ENCODE measurements at regions of chr10 and their contacts with region 1.

Region 1: DNA sequence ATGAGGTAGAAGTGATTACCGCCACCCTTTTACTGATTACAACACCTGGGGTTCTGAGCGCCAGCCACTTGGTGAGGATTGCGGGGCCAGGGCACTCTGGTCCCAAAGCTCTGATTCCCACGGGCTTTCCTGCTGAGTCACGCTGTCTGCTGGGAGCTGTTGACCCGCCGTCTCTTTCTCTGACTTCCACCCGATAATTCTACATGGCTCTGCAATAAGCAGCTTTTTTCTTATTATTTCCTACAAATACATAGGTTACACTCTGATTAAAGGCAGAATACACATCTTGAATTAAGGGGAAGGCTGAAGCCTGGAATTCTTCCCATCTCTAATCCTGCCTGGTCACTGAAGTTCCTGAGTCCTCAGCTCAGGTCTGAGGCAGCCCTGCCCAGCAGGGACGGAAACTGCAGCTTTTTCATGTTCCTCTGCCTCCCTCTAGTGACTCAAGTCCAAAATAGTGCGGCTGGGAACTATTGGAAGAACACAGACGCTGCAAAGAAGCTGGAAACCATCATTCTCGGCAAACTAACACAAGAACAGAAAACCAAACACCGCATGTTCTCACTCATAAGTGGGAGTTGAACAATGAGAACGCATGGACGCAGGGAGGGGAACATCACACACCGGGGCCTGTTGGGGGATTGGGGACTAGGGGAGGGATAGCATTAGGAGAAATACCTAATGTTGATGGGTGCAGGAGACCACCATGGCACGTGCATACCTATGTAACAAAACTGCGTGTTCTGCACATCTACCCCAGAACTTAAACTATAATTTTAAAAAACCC is 178.3 kb downstream of the PRKCQ start:
- DNase-seq: peak; percentile 85
- ATAC-seq: peak; percentile 88
- H3K4me3 ChIP-seq: peak overlapping the region in 2 of 5 experiments; percentile 5 to 12
- H3K4me3 Mint-ChIP-seq: peak overlapping the region; percentile 75
- H3K27ac ChIP-seq: no peak overlapping the region
- H3K27ac Mint-ChIP-seq: peak overlapping the region; percentile 10
- H3K4me1 ChIP-seq: peaks cover 26% of the 10 kb centered on the region in 2 donors
- H3K4me1 Mint-ChIP-seq: peaks cover 33% of the 10 kb centered on the region
- H3K27me3 ChIP-seq: peaks cover 0 to 4% (median 2%) of the 10 kb centered on the region in 4 experiments
- H3K27me3 Mint-ChIP-seq: peaks cover 22% of the 10 kb centered on the region
- CTCF ChIP-seq: peak; percentile 82

Region 2: DNA sequence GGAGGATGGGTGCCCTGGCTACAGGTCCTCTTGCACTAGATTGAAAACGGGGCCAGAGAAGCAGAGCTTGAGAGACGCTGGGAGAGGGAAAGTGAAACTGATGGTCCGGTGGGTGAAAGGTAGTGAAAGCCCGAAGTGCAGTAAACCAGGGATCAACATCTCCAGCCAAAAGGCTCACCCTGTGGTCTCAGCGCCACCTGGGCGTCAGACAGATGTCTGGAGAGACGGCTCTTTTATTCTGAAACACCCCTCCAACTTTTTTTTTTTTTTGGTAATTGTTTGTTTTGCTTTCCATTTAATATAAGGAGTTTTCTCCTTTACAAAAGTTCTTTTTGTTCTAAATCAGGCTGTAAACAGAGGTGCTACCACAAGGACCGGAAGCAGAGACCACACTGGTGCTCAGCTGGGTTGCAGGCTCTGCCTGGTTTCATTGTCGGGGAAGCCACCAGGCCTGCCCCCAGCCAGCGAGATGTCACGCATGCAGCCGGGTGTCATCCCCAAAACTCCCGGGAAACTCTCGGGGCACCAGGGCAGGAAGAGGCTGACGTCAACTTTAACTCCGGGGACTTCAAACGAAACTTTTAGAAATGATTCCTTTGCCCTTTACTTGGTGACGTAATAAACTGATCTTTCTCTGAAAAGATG is 350.8 kb before region 1 on chr10:
- CTCF ChIA-PET with region 1: interaction called, 12 read pairs
- POLR2A ChIA-PET with region 1: no interaction called
- intact Hi-C with region 1: no loop called
- DNase-seq: peak; percentile 96
- ATAC-seq: peak; percentile 66
- H3K4me3 ChIP-seq: peak overlapping the region; percentile 35 to 63 (median 55)
- H3K4me3 Mint-ChIP-seq: peak overlapping the region; percentile 91
- H3K27ac ChIP-seq: peak overlapping the region; percentile 92
- H3K27ac Mint-ChIP-seq: peak overlapping the region; percentile 99
- H3K4me1 ChIP-seq: peaks cover 69 to 82% of the 10 kb centered on the region in 2 donors
- H3K4me1 Mint-ChIP-seq: peaks cover 87% of the 10 kb centered on the region
- H3K27me3 ChIP-seq: no peaks in the 10 kb centered on the region
- H3K27me3 Mint-ChIP-seq: no peaks in the 10 kb centered on the region
- CTCF ChIP-seq: peak; percentile 35

Region 3: GRCh38 chr10:6151087-6151977 is 250.4 kb before region 1 on chr10:
- CTCF ChIA-PET with region 1: interaction called, 77 read pairs
- POLR2A ChIA-PET with region 1: no interaction called
- intact Hi-C with region 1: no loop called
- DNase-seq: peak; percentile 84
- ATAC-seq: peak; percentile 84
- H3K4me3 ChIP-seq: peak overlapping the region; percentile 6 to 58 (median 26)
- H3K4me3 Mint-ChIP-seq: peak overlapping the region; percentile 85
- H3K27ac ChIP-seq: peak overlapping the region; percentile 40 to 78
- H3K27ac Mint-ChIP-seq: peak overlapping the region; percentile 87
- H3K4me1 ChIP-seq: peaks cover 24 to 34% of the 10 kb centered on the region in 2 donors
- H3K4me1 Mint-ChIP-seq: peaks cover 53% of the 10 kb centered on the region
- H3K27me3 ChIP-seq: no peaks in the 10 kb centered on the region
- H3K27me3 Mint-ChIP-seq: no peaks in the 10 kb centered on the region
- CTCF ChIP-seq: peak; percentile 71

Region 4: DNA sequence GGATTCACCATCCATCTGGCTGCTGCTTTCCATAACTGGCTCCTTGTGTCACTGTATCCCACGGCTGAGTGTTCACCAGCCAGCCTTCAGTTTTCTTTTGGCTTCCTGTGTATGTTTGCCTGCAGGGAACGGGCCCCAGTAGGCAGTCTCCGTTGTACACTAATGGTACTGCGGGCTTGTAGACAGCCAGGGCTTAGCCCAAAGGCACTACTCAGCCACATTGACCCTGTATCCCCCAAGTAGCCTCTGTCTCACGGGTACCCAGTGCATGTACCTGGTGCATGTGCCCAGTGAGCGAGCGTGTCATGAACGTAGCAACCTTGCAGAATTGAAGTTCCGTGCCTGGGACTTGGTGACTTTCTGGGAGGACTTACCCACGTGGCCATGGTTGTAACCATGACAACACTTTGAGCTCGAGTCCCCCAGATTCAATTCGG is 192.9 kb before region 1 on chr10:
- CTCF ChIA-PET with region 1: interaction called, 44 read pairs
- POLR2A ChIA-PET with region 1: interaction called, 72 read pairs
- intact Hi-C with region 1: no loop called
- DNase-seq: no peak
- ATAC-seq: no peak
- H3K4me3 ChIP-seq: no peak overlapping the region
- H3K4me3 Mint-ChIP-seq: no peak overlapping the region
- H3K27ac ChIP-seq: no peak overlapping the region
- H3K27ac Mint-ChIP-seq: no peak overlapping the region
- H3K4me1 ChIP-seq: peaks cover 6 to 12% of the 10 kb centered on the region in 2 donors
- H3K4me1 Mint-ChIP-seq: peaks cover 26% of the 10 kb centered on the region
- H3K27me3 ChIP-seq: no peaks in the 10 kb centered on the region
- H3K27me3 Mint-ChIP-seq: no peaks in the 10 kb centered on the region
- CTCF ChIP-seq: no peak

Region 5: GRCh38 chr10:6275022-6275997 is 126.4 kb before region 1 on chr10:
- CTCF ChIA-PET with region 1: interaction called, 13 read pairs
- POLR2A ChIA-PET with region 1: interaction called, 4 read pairs
- intact Hi-C with region 1: no loop called
- DNase-seq: peak; percentile 71
- ATAC-seq: peak; percentile 84
- H3K4me3 ChIP-seq: peak overlapping the region in 4 of 5 experiments; percentile 32 to 54 (median 37)
- H3K4me3 Mint-ChIP-seq: peak overlapping the region; percentile 86
- H3K27ac ChIP-seq: peak overlapping the region in 1 of 2 donors; percentile 54
- H3K27ac Mint-ChIP-seq: peak overlapping the region; percentile 90
- H3K4me1 ChIP-seq: peaks cover 4 to 22% of the 10 kb centered on the region in 2 donors
- H3K4me1 Mint-ChIP-seq: peaks cover 28% of the 10 kb centered on the region
- H3K27me3 ChIP-seq: peaks cover 0 to 5% (median 0%) of the 10 kb centered on the region in 4 experiments
- H3K27me3 Mint-ChIP-seq: no peaks in the 10 kb centered on the region
- CTCF ChIP-seq: no peak

Region 6: GRCh38 chr10:6320320-6321010 is 81.3 kb before region 1 on chr10:
- CTCF ChIA-PET with region 1: interaction called, 26 read pairs
- POLR2A ChIA-PET with region 1: no interaction called
- intact Hi-C with region 1: loop called (anchors 1 kb)
- DNase-seq: peak; percentile 83
- ATAC-seq: peak; percentile 93
- H3K4me3 ChIP-seq: no peak overlapping the region
- H3K4me3 Mint-ChIP-seq: no peak overlapping the region
- H3K27ac ChIP-seq: no peak overlapping the region
- H3K27ac Mint-ChIP-seq: peak overlapping the region; percentile 84
- H3K4me1 ChIP-seq: peaks cover 38 to 51% of the 10 kb centered on the region in 2 donors
- H3K4me1 Mint-ChIP-seq: peaks cover 34% of the 10 kb centered on the region
- H3K27me3 ChIP-seq: no peaks in the 10 kb centered on the region
- H3K27me3 Mint-ChIP-seq: no peaks in the 10 kb centered on the region
- CTCF ChIP-seq: no peak

Region 7: DNA sequence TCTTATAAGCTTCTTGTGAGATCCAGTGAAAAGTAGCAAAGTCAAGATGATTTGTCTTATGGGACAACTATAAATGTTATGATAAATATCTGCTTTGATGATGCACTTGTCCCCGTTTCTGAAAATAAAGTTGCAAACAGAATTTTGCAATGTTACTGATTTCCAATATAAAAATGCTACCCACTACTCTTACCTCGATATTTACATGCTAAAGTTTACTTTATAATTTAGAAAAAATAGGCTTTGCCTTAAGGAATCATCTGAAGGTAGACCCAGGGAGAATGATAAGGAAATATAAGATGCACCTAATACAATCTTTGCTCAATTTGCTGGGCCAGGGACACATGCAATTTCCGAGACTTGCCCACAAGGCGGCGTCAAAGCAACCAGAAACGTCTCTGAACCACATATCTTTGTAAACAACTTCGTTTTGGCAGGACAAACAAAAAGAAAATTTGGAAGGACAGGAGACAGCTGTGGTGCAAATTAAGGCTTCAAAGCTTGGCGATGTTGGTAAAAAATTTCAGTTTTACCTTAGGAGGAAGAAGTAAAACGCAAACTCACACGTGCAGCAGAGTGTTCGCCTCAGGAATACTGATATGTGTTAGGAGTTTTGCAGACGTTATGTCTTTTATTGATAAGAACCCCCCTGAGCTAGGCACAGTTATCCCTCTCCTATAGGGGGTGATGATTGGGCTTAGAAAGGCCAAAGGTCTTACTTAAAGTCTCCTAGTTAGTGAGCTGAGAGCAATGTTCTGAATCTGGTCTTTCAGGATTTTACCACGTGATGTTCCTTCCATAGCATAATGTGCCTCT is 44.0 kb after region 1 on chr10:
- CTCF ChIA-PET with region 1: no interaction called
- POLR2A ChIA-PET with region 1: no interaction called
- intact Hi-C with region 1: no loop called
- DNase-seq: peak; percentile 33
- ATAC-seq: no peak
- H3K4me3 ChIP-seq: no peak overlapping the region
- H3K4me3 Mint-ChIP-seq: peak overlapping the region; percentile 2
- H3K27ac ChIP-seq: no peak overlapping the region
- H3K27ac Mint-ChIP-seq: no peak overlapping the region
- H3K4me1 ChIP-seq: no peaks in the 10 kb centered on the region
- H3K4me1 Mint-ChIP-seq: peaks cover 3% of the 10 kb centered on the region
- H3K27me3 ChIP-seq: no peaks in the 10 kb centered on the region
- H3K27me3 Mint-ChIP-seq: peaks cover 23% of the 10 kb centered on the region
- CTCF ChIP-seq: peak; percentile 55

Region 8: DNA sequence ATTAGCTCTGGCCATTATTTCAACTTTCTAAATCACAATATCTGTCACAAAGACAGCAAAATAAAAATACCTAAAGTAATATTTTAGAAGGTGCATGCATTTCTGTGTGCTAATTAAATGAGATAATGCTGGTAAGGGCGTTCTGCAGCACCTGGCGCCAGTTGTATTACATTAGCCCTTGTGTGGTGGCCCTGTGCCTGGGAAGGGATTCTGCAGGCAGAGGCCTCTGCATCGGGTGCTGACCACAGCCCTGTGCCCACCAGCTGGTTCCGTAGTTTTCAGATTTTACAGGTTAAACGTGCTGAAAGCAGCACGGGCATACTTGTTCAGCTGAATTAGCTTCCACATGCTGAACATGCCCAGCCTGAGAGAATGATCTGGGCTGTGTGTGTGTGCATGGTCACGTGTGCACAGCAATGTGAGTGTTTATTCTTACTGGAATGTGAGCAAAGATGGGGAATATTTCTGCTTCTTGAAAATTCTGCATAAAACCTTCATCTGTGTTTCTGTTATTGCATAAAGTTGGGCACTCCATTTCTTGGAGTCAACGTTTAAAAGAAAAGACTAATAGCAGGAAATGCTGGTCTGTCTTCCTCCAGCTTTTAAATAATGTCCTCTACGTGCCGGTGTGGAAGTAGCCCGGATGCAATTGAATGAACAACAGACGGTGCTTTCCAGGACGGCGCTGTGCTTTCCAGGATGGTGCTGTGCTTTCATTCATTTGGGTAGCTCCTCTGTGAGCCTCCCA is 336.2 kb after region 1 on chr10:
- CTCF ChIA-PET with region 1: no interaction called
- POLR2A ChIA-PET with region 1: no interaction called
- intact Hi-C with region 1: no loop called
- DNase-seq: no peak
- ATAC-seq: no peak
- H3K4me3 ChIP-seq: no peak overlapping the region
- H3K4me3 Mint-ChIP-seq: no peak overlapping the region
- H3K27ac ChIP-seq: no peak overlapping the region
- H3K27ac Mint-ChIP-seq: no peak overlapping the region
- H3K4me1 ChIP-seq: no peaks in the 10 kb centered on the region
- H3K4me1 Mint-ChIP-seq: no peaks in the 10 kb centered on the region
- H3K27me3 ChIP-seq: peaks cover 0 to 12% (median 0%) of the 10 kb centered on the region in 4 experiments
- H3K27me3 Mint-ChIP-seq: peaks cover 28% of the 10 kb centered on the region
- CTCF ChIP-seq: no peak